Activated CD4-positive, alpha-beta T cell treated with anti-CD3 and anti-CD28 coated beads for 36 hours (primary cell): ENCODE measurements at regions of chr1 and their contacts with region 1.

Region 1: DNA sequence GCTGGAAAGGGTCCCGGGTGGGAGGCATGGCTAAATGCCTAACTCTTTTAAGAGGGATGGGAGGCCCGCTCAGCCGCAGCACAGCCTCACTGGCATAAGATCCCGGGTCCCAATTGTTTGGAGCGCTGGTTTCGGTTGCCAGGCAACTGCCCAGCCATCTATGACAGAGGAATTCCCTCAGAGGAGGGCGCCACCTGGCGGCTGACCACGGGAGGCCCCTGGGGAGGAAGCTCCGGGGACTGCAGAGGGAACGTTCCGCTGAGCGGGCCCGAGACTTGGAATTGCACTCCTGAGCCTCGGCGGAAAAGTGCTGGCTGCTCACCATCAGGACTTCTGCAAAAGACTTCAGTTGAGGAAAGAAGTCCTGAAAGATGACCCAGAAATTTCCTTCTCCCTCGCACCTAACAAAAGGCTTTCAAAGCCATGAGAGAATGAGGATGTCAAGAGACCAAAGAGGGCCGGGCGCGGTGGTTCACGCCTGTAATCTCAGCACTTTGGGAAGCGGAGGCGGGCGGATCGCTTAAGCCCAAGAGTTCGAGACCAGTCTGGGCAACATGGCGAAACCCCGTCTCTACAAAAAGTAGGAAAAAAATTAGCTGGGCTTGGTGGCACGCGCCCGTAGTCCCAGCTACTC is 1.1 kb upstream of the ELAPOR1 start:
- DNase-seq: peak; percentile 95
- ATAC-seq: peak; percentile 62
- H3K4me3 Mint-ChIP-seq: peak overlapping the region; percentile 71
- H3K27ac Mint-ChIP-seq: peak overlapping the region; percentile 65
- H3K4me1 Mint-ChIP-seq: peaks cover 41% of the 10 kb centered on the region
- H3K27me3 Mint-ChIP-seq: no peaks in the 10 kb centered on the region

Region 2: DNA sequence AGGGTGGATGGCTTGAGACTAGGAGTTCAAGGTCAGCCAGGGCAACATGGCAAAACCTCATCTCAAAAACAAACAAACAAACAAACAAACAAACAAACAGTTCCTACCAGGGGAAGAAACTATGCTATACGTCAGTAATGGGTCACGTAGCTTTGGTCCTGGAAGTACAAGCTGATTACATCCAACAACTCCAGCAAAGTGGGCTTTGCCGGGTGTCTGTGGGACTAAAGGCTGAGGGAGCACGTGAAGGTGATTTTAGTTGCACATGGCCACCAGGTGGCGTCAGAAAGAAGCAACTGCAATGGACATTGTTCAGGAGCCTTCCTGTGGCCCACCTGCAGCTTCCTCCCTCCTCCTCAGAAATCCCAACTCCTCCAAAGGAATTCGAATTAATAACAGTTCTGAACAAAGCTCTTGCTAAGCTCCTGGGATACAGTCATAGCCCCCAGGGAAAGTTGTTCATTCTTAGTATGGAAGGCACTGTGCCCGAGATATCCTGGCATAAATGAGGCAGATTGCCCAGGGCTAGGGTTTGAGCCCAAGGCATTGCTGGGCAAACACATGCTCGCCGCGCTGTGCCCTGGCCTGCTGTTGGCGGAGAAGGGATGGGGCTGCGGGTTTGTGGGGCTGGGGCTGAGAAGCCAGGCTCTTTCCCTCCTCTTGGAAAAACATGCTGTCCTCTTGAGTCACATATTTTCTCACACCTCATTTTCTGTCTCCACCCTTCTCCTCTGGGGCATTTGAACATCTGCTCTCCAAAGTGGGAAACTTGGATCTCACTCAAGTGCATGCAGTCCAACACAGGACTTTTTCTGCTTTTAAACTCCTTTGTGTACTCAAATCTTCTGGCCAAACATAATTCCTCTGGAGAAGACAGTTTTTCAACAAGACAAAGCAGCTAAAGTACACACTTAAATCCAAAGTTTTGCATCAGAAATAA is 284.5 kb before region 1 on chr1:
- CTCF ChIA-PET with region 1: interaction called, 23 read pairs
- POLR2A ChIA-PET with region 1: no interaction called
- intact Hi-C with region 1: loop called (anchors 1 kb)
- DNase-seq: peak; percentile 85
- ATAC-seq: peak; percentile 74
- H3K4me3 Mint-ChIP-seq: no peak overlapping the region
- H3K27ac Mint-ChIP-seq: no peak overlapping the region
- H3K4me1 Mint-ChIP-seq: no peaks in the 10 kb centered on the region
- H3K27me3 Mint-ChIP-seq: no peaks in the 10 kb centered on the region

Region 3: GRCh38 chr1:108963052-108963686 is 149.6 kb before region 1 on chr1 and contains the start of gene CLCC1:
- CTCF ChIA-PET with region 1: interaction called, 7 read pairs
- POLR2A ChIA-PET with region 1: no interaction called
- intact Hi-C with region 1: loop called in 1 of 2 experiments (anchors 2 kb)
- DNase-seq: peak; percentile 96
- ATAC-seq: peak; percentile 97
- H3K4me3 Mint-ChIP-seq: peak within 1 kb of the TSS; percentile 81
- H3K27ac Mint-ChIP-seq: peak within 1 kb of the TSS; percentile 91
- H3K4me1 Mint-ChIP-seq: peaks cover 26% of the 10 kb centered on the region
- H3K27me3 Mint-ChIP-seq: no peaks in the 10 kb centered on the region
- total RNA-seq, gene CLCC1: 15.7 to 17.1 TPM

Region 4: GRCh38 chr1:109075531-109076490 is 37.0 kb before region 1 on chr1 and contains the start of gene TAF13:
- CTCF ChIA-PET with region 1: interaction called, 7 read pairs
- POLR2A ChIA-PET with region 1: no interaction called
- intact Hi-C with region 1: loop called in 1 of 2 experiments (anchors 1 kb)
- DNase-seq: peak; percentile 93
- ATAC-seq: peak; percentile 99
- H3K4me3 Mint-ChIP-seq: peak within 1 kb of the TSS; percentile 95
- H3K27ac Mint-ChIP-seq: peak within 1 kb of the TSS; percentile 94
- H3K4me1 Mint-ChIP-seq: peaks cover 10% of the 10 kb centered on the region
- H3K27me3 Mint-ChIP-seq: no peaks in the 10 kb centered on the region
- total RNA-seq, gene TAF13: 12.1 to 20.1 TPM

Region 5: GRCh38 chr1:109099938-109100773 is 12.6 kb before region 1 on chr1:
- CTCF ChIA-PET with region 1: interaction called, 73 read pairs
- POLR2A ChIA-PET with region 1: interaction called, 15 read pairs
- intact Hi-C with region 1: loop called (anchors 1 kb)
- DNase-seq: peak; percentile 98
- ATAC-seq: peak; percentile 94
- H3K4me3 Mint-ChIP-seq: peak overlapping the region; percentile 98
- H3K27ac Mint-ChIP-seq: peak overlapping the region; percentile 98
- H3K4me1 Mint-ChIP-seq: peaks cover 6% of the 10 kb centered on the region
- H3K27me3 Mint-ChIP-seq: no peaks in the 10 kb centered on the region

Region 6: DNA sequence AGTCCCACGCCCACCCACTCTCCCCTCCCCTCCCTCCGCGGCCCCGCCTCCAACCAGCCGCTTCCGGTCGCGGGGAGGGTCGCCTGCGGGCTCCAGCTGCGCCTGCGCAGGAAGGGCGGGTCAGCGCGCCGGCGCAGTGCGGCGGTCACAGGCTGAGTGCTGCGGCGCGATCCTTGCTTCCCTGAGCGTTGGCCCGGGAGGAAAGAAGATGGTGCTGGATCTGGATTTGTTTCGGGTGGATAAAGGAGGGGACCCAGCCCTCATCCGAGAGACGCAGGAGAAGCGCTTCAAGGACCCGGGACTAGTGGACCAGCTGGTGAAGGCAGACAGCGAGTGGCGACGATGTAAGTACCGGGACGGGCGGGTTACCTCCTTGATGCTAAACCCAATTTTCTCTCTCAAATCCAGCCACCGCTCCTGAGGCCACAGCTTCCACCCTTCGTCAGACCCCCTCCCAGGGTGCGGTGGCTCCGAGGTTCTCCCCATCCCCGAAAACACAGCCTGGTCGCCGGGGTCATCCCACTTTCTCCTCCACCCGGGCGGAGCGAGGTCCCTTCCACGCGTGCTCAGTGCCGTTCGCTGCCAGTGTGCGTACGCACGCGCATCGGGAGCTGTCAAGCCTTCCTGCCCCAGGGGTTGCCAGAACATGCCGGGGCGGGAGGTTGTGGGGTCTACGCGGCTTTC is 101.2 kb after region 1 on chr1 and contains the start of gene SARS1:
- CTCF ChIA-PET with region 1: interaction called, 8 read pairs
- POLR2A ChIA-PET with region 1: no interaction called
- intact Hi-C with region 1: loop called in 1 of 2 experiments (anchors 2 kb)
- DNase-seq: peak; percentile 93
- ATAC-seq: peak; percentile 85
- H3K4me3 Mint-ChIP-seq: peak within 1 kb of the TSS; percentile 97
- H3K27ac Mint-ChIP-seq: peak within 1 kb of the TSS; percentile 95
- H3K4me1 Mint-ChIP-seq: peaks cover 32% of the 10 kb centered on the region
- H3K27me3 Mint-ChIP-seq: peaks cover 1% of the 10 kb centered on the region
- total RNA-seq, gene SARS1: 224 to 240 TPM